CD4-positive, alpha-beta memory T cell (primary cell): ENCODE measurements at regions of chr9 and their contacts with region 1.

Region 1: GRCh38 chr9:72592502-72593403 is 71.3 kb downstream of the TMC1 start:
- DNase-seq: peak in 4 of 5 donors; percentile 50 to 58 (median 56)
- H3K4me3 ChIP-seq: no peak overlapping the region
- H3K4me3 Mint-ChIP-seq: no peak overlapping the region
- H3K27ac ChIP-seq: no peak overlapping the region
- H3K27ac Mint-ChIP-seq: no peak overlapping the region
- H3K4me1 ChIP-seq: peaks cover 7% of the 10 kb centered on the region
- H3K4me1 Mint-ChIP-seq: peaks cover 8 to 22% (median 10%) of the 10 kb centered on the region in 4 donors
- H3K27me3 ChIP-seq: no peaks in the 10 kb centered on the region
- H3K27me3 Mint-ChIP-seq: peaks cover 3 to 6% of the 10 kb centered on the region in 2 donors

Region 2: GRCh38 chr9:72280913-72281500 is 311.7 kb before region 1 on chr9:
- CTCF ChIA-PET with region 1: interaction called, 368 read pairs
- POLR2A ChIA-PET with region 1: no interaction called
- intact Hi-C with region 1: loop called (anchors 1 kb)
- DNase-seq: peak; percentile 61 to 66 (median 64)
- H3K4me3 ChIP-seq: no peak overlapping the region
- H3K4me3 Mint-ChIP-seq: no peak overlapping the region
- H3K27ac ChIP-seq: no peak overlapping the region
- H3K27ac Mint-ChIP-seq: no peak overlapping the region
- H3K4me1 ChIP-seq: no peaks in the 10 kb centered on the region
- H3K4me1 Mint-ChIP-seq: no peaks in the 10 kb centered on the region
- H3K27me3 ChIP-seq: no peaks in the 10 kb centered on the region
- H3K27me3 Mint-ChIP-seq: peaks cover 0 to 1% of the 10 kb centered on the region in 2 donors

Region 3: DNA sequence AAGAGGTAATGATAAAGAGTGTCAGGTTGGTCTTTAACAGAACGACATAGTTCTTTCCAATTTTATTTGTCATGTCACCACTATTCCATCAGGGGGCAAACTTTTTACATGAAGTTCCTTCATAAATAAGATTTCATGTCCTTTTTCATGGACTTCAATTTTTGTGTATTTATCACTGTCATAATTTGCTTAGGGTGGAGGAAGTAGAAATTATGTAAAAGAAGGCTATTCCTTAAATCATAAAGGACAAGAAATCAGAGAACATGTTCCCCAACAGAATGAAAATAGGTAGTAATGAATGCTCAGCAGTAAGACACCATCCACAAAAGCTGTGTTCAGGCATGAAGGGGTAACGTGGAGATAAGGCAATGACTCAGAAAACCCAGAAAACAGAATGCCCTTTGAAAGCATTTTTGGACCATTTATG is 300.5 kb before region 1 on chr9:
- CTCF ChIA-PET with region 1: interaction called, 184 read pairs
- POLR2A ChIA-PET with region 1: interaction called, 3 read pairs
- intact Hi-C with region 1: loop called (anchors 1 kb)
- DNase-seq: peak in 4 of 5 donors; percentile 24 to 37 (median 29)
- H3K4me3 ChIP-seq: no peak overlapping the region
- H3K4me3 Mint-ChIP-seq: no peak overlapping the region
- H3K27ac ChIP-seq: no peak overlapping the region
- H3K27ac Mint-ChIP-seq: no peak overlapping the region
- H3K4me1 ChIP-seq: no peaks in the 10 kb centered on the region
- H3K4me1 Mint-ChIP-seq: peaks cover 0 to 3% (median under 1%) of the 10 kb centered on the region in 4 donors
- H3K27me3 ChIP-seq: no peaks in the 10 kb centered on the region
- H3K27me3 Mint-ChIP-seq: peaks cover 5 to 6% of the 10 kb centered on the region in 2 donors

Region 4: GRCh38 chr9:72333709-72334108 is 259.0 kb before region 1 on chr9:
- CTCF ChIA-PET with region 1: no interaction called
- POLR2A ChIA-PET with region 1: no interaction called
- intact Hi-C with region 1: no loop called
- DNase-seq: no peak
- H3K4me3 ChIP-seq: no peak overlapping the region
- H3K4me3 Mint-ChIP-seq: no peak overlapping the region
- H3K27ac ChIP-seq: no peak overlapping the region
- H3K27ac Mint-ChIP-seq: no peak overlapping the region
- H3K4me1 ChIP-seq: no peaks in the 10 kb centered on the region
- H3K4me1 Mint-ChIP-seq: peaks cover 0 to 1% (median 0%) of the 10 kb centered on the region in 4 donors
- H3K27me3 ChIP-seq: no peaks in the 10 kb centered on the region
- H3K27me3 Mint-ChIP-seq: no peaks in the 10 kb centered on the region

Region 5: GRCh38 chr9:72443855-72444254 is 148.9 kb before region 1 on chr9:
- CTCF ChIA-PET with region 1: interaction called, 8 read pairs
- POLR2A ChIA-PET with region 1: interaction called, 3 read pairs
- intact Hi-C with region 1: loop called (anchors 1 kb)
- DNase-seq: peak in 3 of 5 donors; percentile 10 to 42 (median 14)
- H3K4me3 ChIP-seq: no peak overlapping the region
- H3K4me3 Mint-ChIP-seq: peak overlapping the region in 5 of 8 donors; percentile 25 to 67 (median 39)
- H3K27ac ChIP-seq: peak overlapping the region; percentile 5
- H3K27ac Mint-ChIP-seq: peak overlapping the region; percentile 48 to 92 (median 80)
- H3K4me1 ChIP-seq: peaks cover 36% of the 10 kb centered on the region
- H3K4me1 Mint-ChIP-seq: peaks cover 22 to 41% (median 31%) of the 10 kb centered on the region in 4 donors
- H3K27me3 ChIP-seq: no peaks in the 10 kb centered on the region
- H3K27me3 Mint-ChIP-seq: no peaks in the 10 kb centered on the region

Region 6: DNA sequence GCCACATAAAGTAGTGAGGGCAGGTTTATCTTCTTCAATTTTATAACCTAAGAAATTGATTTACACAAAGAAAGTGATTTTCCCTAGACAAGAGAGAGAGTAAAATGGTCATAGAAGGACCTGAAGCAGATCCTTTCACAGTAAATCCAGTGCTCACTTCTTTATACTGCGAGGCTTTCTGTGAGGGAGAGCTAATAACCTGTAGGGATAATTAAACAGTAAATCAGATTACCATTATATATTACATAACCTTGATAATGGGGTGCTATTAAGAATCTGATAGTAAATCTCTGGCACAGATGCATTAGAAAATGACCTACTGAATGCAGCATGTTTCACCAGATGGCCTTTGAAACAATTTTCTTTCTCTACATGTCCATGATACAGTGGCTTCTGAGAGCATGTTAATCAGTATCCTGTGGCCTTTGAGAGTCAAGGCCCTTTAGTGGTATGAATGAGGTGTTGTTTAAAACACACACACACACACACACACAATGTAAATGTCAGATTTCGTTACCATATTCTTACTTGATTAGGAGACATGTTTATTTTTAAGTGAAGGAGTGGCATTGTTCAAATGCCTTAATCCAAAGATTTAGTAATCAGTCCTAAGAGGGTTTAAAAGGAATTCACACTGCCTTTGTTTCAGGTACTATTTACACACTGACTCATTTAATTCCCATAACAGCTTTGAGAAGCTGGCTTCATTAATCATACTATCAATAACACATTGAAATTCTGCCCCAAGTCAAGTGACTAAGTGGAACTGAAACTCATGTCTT is 235.4 kb after region 1 on chr9:
- CTCF ChIA-PET with region 1: no interaction called
- POLR2A ChIA-PET with region 1: no interaction called
- intact Hi-C with region 1: loop called (anchors 10 kb)
- DNase-seq: no peak
- H3K4me3 ChIP-seq: no peak overlapping the region
- H3K4me3 Mint-ChIP-seq: no peak overlapping the region
- H3K27ac ChIP-seq: no peak overlapping the region
- H3K27ac Mint-ChIP-seq: no peak overlapping the region
- H3K4me1 ChIP-seq: no peaks in the 10 kb centered on the region
- H3K4me1 Mint-ChIP-seq: no peaks in the 10 kb centered on the region
- H3K27me3 ChIP-seq: no peaks in the 10 kb centered on the region
- H3K27me3 Mint-ChIP-seq: peaks cover 3 to 4% of the 10 kb centered on the region in 2 donors

Region 7: DNA sequence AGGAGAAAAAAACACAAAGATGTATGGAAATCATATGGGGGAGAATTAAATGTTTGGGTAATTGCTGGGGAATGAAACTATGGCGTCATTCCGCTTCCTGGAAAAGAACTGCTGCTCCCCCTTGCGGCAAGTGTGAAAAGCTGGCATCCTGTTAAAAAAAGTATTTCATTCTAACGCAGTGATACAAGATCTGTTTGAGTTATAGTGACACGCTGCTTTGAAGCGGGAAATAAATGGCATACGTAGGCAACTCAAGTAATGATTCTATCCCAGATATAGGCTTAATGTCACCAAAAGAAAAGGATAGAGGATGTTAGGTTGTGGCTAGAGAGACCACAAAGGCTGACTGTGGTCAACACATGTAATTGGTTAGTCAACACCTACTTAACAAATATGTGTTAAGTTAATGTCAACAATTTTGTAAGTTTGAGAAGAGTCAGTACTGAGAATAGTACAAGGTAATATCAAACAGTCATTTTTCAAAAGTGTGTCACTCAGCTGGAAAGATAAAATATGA is 430.3 kb after region 1 on chr9:
- CTCF ChIA-PET with region 1: no interaction called
- POLR2A ChIA-PET with region 1: no interaction called
- intact Hi-C with region 1: loop called (anchors 5 kb)
- DNase-seq: peak; percentile 32 to 49 (median 35)
- H3K4me3 ChIP-seq: no peak overlapping the region
- H3K4me3 Mint-ChIP-seq: peak overlapping the region in 1 of 8 donors; percentile 12
- H3K27ac ChIP-seq: no peak overlapping the region
- H3K27ac Mint-ChIP-seq: no peak overlapping the region
- H3K4me1 ChIP-seq: peaks cover 4% of the 10 kb centered on the region
- H3K4me1 Mint-ChIP-seq: peaks cover 0 to 10% (median 6%) of the 10 kb centered on the region in 4 donors
- H3K27me3 ChIP-seq: no peaks in the 10 kb centered on the region
- H3K27me3 Mint-ChIP-seq: peaks cover 6 to 11% of the 10 kb centered on the region in 2 donors